Calu3 (cell line): ENCODE measurements at regions of chr2 and their contacts with region 1.

Region 1: DNA sequence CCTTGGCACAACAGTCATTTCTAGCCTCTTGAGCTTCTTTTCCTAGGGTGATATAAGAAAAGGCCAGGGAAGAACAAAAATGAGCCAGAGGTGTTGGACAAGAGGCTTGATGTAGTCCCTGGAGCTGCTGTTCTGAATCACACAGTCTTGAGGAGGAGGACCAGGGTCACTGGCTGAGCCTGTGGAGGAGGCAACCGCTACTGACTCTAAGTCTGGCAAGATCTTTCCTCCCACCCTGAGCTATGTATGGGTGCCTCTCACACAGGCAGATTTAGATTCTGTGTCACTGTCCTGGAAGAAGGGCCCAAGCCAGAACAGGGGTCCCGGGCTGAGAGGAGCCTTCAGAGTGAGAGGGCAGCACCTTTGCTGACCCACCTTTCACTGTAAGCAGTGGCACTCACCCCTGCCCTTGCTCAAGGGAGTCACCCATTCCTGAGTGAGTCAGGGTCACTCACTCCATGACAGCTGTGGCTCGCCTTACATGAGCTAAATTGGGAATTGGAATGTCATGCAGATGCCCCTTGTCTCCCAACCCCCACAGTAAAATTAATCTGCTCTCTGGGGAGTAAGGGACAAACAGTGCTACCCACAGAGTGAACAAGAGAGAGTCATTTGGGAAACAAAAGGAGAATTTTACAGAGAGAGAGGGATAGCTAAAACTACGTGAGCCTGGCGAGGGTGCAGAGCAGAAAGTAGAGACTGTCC is at the start of gene TRIM54:
- DNase-seq: no peak
- H3K4me3 Mint-ChIP-seq: no peak within 1 kb of the TSS
- H3K27ac Mint-ChIP-seq: no peak within 1 kb of the TSS
- H3K4me1 Mint-ChIP-seq: peaks cover 27% of the 10 kb centered on the region
- H3K27me3 Mint-ChIP-seq: peaks cover 82% of the 10 kb centered on the region
- CTCF ChIP-seq: no peak
- total RNA-seq, gene TRIM54: 0.99 and 2.3 TPM in 2 replicates

Region 2: GRCh38 chr2:27264753-27265535 is 17.1 kb before region 1 on chr2:
- CTCF ChIA-PET with region 1: interaction called, 14 read pairs
- intact Hi-C with region 1: no loop called
- DNase-seq: peak; percentile 87
- H3K4me3 Mint-ChIP-seq: peak overlapping the region; percentile 67
- H3K27ac Mint-ChIP-seq: no peak overlapping the region
- H3K4me1 Mint-ChIP-seq: peaks cover 7% of the 10 kb centered on the region
- H3K27me3 Mint-ChIP-seq: peaks cover 24% of the 10 kb centered on the region
- CTCF ChIP-seq: peak; percentile 67

Region 3: DNA sequence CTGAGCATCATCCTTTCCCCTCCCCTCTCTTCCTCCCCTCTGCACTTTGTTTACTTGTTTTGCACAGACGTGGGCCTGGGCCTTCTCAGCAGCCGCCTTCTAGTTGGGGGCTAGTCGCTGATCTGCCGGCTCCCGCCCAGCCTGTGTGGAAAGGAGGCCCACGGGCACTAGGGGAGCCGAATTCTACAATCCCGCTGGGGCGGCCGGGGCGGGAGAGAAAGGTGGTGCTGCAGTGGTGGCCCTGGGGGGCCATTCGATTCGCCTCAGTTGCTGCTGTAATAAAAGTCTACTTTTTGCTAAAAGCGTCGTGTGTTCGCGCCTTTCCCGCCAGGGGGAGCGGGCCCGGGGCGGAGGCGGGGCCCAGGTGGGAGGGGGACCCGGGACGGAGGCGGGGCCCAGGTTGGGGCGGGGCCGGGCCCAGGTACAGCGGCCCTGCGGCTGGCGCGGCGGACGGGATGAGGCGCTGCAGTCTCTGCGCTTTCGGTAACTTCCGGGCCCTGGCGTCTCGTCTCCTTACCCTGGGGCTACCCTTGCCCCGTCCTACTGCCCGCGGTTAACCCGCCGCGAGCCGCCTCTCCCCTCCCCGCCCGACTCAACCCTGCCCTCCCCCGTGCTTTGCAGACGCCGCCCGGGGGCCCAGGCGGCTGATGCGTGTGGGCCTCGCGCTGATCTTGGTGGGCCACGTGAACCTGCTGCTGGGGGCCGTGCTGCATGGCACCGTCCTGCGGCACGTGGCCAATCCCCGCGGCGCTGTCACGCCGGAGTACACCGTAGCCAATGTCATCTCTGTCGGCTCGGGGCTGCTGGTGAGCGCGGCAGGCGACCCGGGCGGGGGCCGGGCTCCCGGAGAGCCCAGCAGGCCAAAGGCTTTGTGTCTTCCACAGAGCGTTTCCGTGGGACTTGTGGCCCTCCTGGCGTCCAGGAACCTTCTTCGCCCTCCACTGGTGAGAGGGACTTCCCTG is 160.2 kb after region 1 on chr2 and contains the start of gene KRTCAP3:
- CTCF ChIA-PET with region 1: no interaction called
- intact Hi-C with region 1: no loop called
- DNase-seq: peak; percentile 94
- H3K4me3 Mint-ChIP-seq: peak within 1 kb of the TSS; percentile 79
- H3K27ac Mint-ChIP-seq: peak within 1 kb of the TSS; percentile 85
- H3K4me1 Mint-ChIP-seq: peaks cover 26% of the 10 kb centered on the region
- H3K27me3 Mint-ChIP-seq: no peaks in the 10 kb centered on the region
- CTCF ChIP-seq: peak; percentile 86
- total RNA-seq, gene KRTCAP3: 71.8 and 74.0 TPM in 2 replicates